WTC11 (cell line): ENCODE measurements at regions of chr1 and their contacts with region 1.

Region 1: GRCh38 chr1:35715568-35716002 is 3.1 kb downstream of the C1orf216 start:
- DNase-seq: peak; percentile 86
- ATAC-seq: peak; percentile 69
- H3K4me3 Mint-ChIP-seq: no peak overlapping the region
- H3K27ac Mint-ChIP-seq: peak overlapping the region; percentile 70; the same call in 1 of the 2 replicates
- H3K4me1 Mint-ChIP-seq: peaks cover 24% of the 10 kb centered on the region
- H3K27me3 Mint-ChIP-seq: peaks cover 14% of the 10 kb centered on the region
- CTCF ChIP-seq: peak; percentile 73

Region 2: DNA sequence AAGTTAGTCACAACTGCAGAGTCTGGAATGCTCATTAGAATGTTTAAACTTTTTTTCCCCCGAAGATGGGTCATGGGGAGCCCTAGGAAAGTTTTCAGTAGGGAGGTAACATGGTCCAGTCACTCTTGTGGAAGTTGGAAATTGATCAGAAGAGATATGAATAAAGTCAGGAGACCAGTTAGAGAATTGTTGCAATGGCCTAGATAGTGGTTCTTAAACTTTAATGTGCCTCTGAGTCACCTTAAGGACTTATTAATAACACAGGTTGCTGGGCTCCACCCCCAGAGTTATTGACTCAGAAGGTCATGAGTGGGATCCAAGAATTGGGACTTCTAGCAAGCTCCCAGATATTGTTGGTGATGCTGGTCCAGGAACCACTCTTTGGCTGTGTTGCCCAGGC is 145.6 kb before region 1 on chr1:
- CTCF ChIA-PET with region 1: interaction called, 49 read pairs
- POLR2A ChIA-PET with region 1: interaction called, 3 read pairs
- DNase-seq: no peak
- ATAC-seq: no peak
- H3K4me3 Mint-ChIP-seq: no peak overlapping the region
- H3K27ac Mint-ChIP-seq: no peak overlapping the region
- H3K4me1 Mint-ChIP-seq: peaks cover 15% of the 10 kb centered on the region
- H3K27me3 Mint-ChIP-seq: peaks cover 60% of the 10 kb centered on the region
- CTCF ChIP-seq: no peak

Region 3: GRCh38 chr1:35646043-35646442 is 69.5 kb before region 1 on chr1:
- CTCF ChIA-PET with region 1: interaction called, 18 read pairs
- POLR2A ChIA-PET with region 1: interaction called, 3 read pairs
- DNase-seq: no peak
- ATAC-seq: peak; percentile 48
- H3K4me3 Mint-ChIP-seq: no peak overlapping the region
- H3K27ac Mint-ChIP-seq: no peak overlapping the region
- H3K4me1 Mint-ChIP-seq: no peaks in the 10 kb centered on the region
- H3K27me3 Mint-ChIP-seq: peaks cover 38% of the 10 kb centered on the region
- CTCF ChIP-seq: no peak

Region 4: DNA sequence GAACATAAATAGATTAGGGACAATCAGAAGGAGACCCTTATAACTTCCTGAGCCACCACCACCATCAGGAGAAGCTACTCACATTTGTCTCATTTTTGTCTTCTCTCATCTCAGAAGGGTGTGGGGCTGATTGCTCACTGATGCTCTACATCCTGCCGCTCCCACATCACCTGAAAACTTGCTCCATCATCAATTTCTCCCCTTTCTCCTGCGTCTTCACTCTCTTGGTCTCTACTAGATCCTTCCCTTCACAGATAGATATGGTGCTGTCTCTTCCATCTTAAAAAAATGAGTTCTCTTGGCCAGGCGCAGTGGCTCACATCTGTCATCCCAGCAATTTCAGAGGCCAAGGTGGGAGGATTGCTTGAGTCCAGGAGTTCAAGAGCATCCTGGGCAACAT is 35.3 kb before region 1 on chr1:
- CTCF ChIA-PET with region 1: interaction called, 16 read pairs
- POLR2A ChIA-PET with region 1: no interaction called
- DNase-seq: no peak
- ATAC-seq: no peak
- H3K4me3 Mint-ChIP-seq: no peak overlapping the region
- H3K27ac Mint-ChIP-seq: no peak overlapping the region
- H3K4me1 Mint-ChIP-seq: no peaks in the 10 kb centered on the region
- H3K27me3 Mint-ChIP-seq: peaks cover 3% of the 10 kb centered on the region; the same call in 1 of the 2 replicates
- CTCF ChIP-seq: no peak

Region 5: GRCh38 chr1:35702508-35702907 is 13.1 kb before region 1 on chr1:
- CTCF ChIA-PET with region 1: interaction called, 47 read pairs
- POLR2A ChIA-PET with region 1: interaction called, 7 read pairs
- DNase-seq: no peak
- ATAC-seq: peak; percentile 10; the same call in 1 of the 2 replicates
- H3K4me3 Mint-ChIP-seq: peak overlapping the region; percentile 33
- H3K27ac Mint-ChIP-seq: no peak overlapping the region
- H3K4me1 Mint-ChIP-seq: peaks cover 45% of the 10 kb centered on the region
- H3K27me3 Mint-ChIP-seq: peaks cover 42% of the 10 kb centered on the region
- CTCF ChIP-seq: no peak

Region 6: DNA sequence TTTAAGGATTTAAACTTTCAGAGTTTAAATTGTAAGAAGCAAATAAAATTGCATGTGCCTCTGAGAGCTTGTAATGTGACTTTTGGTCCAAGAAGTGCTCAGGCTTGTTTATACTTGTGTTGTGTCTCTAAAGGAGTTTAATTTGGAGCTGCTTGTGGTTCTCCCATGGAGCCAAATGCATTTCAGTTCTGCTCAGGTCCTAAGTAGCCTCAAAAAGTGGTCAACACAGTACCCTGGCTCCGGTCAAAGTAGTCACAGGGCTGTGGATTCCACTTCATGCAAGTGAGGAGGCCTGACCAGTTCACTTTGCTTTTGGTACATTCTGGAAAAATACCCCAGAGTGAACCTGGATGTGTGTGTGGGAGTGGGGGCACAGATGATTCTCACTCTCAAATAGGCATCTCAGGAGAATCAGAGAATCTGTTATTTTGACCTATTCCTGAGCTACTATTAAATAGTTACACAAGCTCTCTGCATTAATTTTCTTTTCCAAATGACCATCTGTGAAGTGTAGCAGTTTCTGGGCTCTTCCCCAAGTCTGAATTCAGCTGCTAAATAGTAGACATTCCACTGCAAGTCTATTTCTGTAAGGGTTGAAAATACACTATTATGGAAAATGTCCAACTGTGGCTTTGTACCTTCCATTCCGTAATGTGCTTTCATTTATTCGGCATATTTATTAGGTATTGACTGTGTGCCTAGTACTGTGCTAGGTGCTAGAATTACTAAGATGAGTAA is 135.7 kb after region 1 on chr1:
- CTCF ChIA-PET with region 1: no interaction called
- POLR2A ChIA-PET with region 1: no interaction called
- DNase-seq: no peak
- ATAC-seq: no peak
- H3K4me3 Mint-ChIP-seq: no peak overlapping the region
- H3K27ac Mint-ChIP-seq: no peak overlapping the region
- H3K4me1 Mint-ChIP-seq: peaks cover 28% of the 10 kb centered on the region
- H3K27me3 Mint-ChIP-seq: no peaks in the 10 kb centered on the region
- CTCF ChIP-seq: no peak